Keratinocyte (primary cell): ENCODE measurements at regions of chr15 and their contacts with region 1.

Region 1: DNA sequence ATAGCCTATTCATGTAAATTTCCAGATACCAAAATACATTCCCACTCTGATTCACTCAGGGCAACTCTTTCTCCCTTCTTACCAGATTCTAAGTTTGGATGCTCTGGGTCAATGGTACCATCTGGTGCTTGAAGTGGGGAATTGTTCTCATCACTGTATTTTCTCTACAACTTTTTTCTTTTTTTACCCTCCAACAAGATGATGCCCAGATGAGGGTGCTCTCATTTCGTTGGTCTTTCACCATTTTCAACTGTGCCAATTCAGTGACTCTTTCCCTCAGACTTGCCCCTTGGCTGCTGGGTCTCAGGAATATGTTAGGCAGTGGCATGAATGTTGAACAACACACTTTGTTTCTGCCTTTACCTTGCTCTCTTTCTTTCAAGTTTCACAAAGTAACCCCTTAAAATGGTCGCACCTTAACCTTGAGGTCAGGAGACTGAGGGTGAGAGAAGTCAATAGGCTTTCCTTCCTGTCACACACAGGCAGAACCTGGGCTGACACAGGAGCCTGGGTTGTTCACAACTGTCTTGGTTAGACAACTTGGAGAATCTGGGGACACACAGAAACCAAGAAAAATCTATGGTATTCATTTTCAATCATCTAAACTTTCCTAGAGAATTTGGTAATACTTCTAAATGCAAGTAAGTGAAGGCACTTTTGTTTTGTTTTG is 330.7 kb upstream of the SLCO3A1 start:
- DNase-seq: no peak
- H3K4me3 ChIP-seq: no peak overlapping the region
- H3K27ac ChIP-seq: no peak overlapping the region
- H3K4me1 ChIP-seq: peaks cover 3% of the 10 kb centered on the region
- H3K27me3 ChIP-seq: no peaks in the 10 kb centered on the region
- CTCF ChIP-seq: peak; percentile 41 to 53 (median 42)

Region 2: DNA sequence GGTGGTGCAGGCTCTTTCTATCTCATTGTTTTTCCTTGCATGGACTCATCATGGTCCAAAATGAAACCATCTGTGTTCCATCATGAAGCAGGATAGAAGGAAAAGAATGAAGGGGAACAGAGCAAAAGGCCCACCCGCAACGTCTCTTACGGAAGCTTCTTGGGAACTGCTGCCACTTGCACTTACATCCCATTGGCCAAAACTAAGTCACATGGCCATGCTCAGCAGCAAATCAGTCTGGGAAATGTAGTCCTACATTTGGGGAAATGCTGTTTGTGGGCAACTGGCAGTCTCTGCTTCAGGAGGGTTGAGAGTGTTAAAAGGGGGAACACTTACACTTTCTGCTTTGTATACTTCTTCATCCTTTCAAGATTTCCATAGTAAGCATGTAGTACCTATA is 231.1 kb before region 1 on chr15:
- dilution Hi-C with region 1: loop called (anchors 25 kb)
- DNase-seq: no peak
- H3K4me3 ChIP-seq: no peak overlapping the region
- H3K27ac ChIP-seq: no peak overlapping the region
- H3K4me1 ChIP-seq: no peaks in the 10 kb centered on the region
- H3K27me3 ChIP-seq: no peaks in the 10 kb centered on the region
- CTCF ChIP-seq: no peak